IMR-90 (cell line): ENCODE measurements at regions of chr11 and their contacts with region 1.

Region 1: GRCh38 chr11:17504330-17505107 is 27.9 kb upstream of the ABCC8 start:
- DNase-seq: peak; percentile 57
- ATAC-seq: peak; percentile 95
- H3K4me3 ChIP-seq: no peak overlapping the region
- H3K27ac ChIP-seq: no peak overlapping the region
- H3K4me1 ChIP-seq: no peaks in the 10 kb centered on the region
- H3K27me3 ChIP-seq: peaks cover 8% of the 10 kb centered on the region; the same call in 1 of the 2 replicates
- CTCF ChIP-seq: peak; percentile 96
- POLR2A ChIP-seq: no peak
- RAD21 ChIP-seq: peak; percentile 91

Region 2: GRCh38 chr11:16685914-16686313 is 818.6 kb before region 1 on chr11:
- CTCF ChIA-PET with region 1: no interaction called
- POLR2A ChIA-PET with region 1: no interaction called
- dilution Hi-C with region 1: no loop called
- in situ Hi-C with region 1: no loop called
- intact Hi-C with region 1: no loop called
- DNase-seq: no peak
- ATAC-seq: no peak
- H3K4me3 ChIP-seq: no peak overlapping the region
- H3K27ac ChIP-seq: no peak overlapping the region
- H3K4me1 ChIP-seq: no peaks in the 10 kb centered on the region
- H3K27me3 ChIP-seq: no peaks in the 10 kb centered on the region
- CTCF ChIP-seq: no peak
- POLR2A ChIP-seq: no peak
- RAD21 ChIP-seq: no peak

Region 3: GRCh38 chr11:16785520-16786128 is 718.9 kb before region 1 on chr11:
- CTCF ChIA-PET with region 1: no interaction called
- POLR2A ChIA-PET with region 1: no interaction called
- dilution Hi-C with region 1: no loop called
- in situ Hi-C with region 1: no loop called
- intact Hi-C with region 1: loop called (anchors 10 kb)
- DNase-seq: peak; percentile 75
- ATAC-seq: peak; percentile 95
- H3K4me3 ChIP-seq: no peak overlapping the region
- H3K27ac ChIP-seq: no peak overlapping the region
- H3K4me1 ChIP-seq: no peaks in the 10 kb centered on the region
- H3K27me3 ChIP-seq: no peaks in the 10 kb centered on the region; the same call in 1 of the 2 replicates
- CTCF ChIP-seq: peak; percentile 85
- POLR2A ChIP-seq: no peak
- RAD21 ChIP-seq: peak; percentile 79

Region 4: DNA sequence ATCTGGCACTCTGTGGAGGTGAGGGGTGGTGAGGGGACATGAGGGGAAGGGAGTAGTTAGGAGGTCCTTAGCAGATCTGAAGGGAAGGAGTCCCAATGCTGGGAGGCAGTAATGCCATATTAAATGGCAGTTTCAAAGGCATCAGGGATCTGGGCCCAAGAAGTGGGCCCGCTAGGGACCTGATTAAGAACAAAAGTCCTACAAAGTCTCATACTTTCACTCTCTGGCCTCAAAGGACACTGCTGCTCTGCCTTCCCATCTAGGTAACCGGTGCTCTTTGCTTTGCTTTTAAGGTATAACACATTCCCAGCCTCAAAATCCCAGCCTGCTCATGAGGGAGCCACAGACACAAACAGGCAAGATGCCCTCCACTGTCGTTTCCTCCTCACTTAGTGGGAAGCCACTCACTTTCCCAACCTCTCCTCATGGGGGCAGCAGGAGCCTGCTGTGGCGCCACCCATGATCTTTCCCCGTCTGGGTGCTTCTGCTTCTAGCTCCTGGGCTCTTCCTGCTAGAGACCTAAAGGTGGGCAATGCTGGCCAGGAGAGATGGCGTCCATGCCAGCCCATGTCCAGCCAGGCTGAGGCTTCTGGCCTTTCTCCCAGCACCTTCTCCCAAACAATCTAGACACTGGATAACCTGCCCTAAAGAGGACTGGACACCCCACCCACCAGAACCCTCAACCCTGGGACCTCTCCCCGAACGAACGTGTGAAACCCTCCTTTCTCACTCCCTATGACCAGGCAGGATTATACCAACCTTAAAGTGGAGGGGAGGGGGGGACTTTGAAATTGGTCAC is 558.6 kb before region 1 on chr11:
- CTCF ChIA-PET with region 1: no interaction called
- POLR2A ChIA-PET with region 1: no interaction called
- dilution Hi-C with region 1: no loop called
- in situ Hi-C with region 1: loop called (anchors 25 kb)
- intact Hi-C with region 1: loop called (anchors 1 kb)
- DNase-seq: peak; percentile 34
- ATAC-seq: peak; percentile 93
- H3K4me3 ChIP-seq: no peak overlapping the region
- H3K27ac ChIP-seq: no peak overlapping the region
- H3K4me1 ChIP-seq: no peaks in the 10 kb centered on the region
- H3K27me3 ChIP-seq: peaks cover 6% of the 10 kb centered on the region; the same call in 1 of the 2 replicates
- CTCF ChIP-seq: peak; percentile 57
- POLR2A ChIP-seq: no peak
- RAD21 ChIP-seq: peak; percentile 71

Region 5: GRCh38 chr11:17354601-17354991 is 149.9 kb before region 1 on chr11:
- CTCF ChIA-PET with region 1: interaction called, 5 read pairs
- POLR2A ChIA-PET with region 1: interaction called, 3 read pairs
- dilution Hi-C with region 1: no loop called
- in situ Hi-C with region 1: no loop called
- intact Hi-C with region 1: loop called (anchors 1 kb)
- DNase-seq: peak; percentile 79
- ATAC-seq: no peak; the same call in 1 of the 2 replicates
- H3K4me3 ChIP-seq: no peak overlapping the region
- H3K27ac ChIP-seq: no peak overlapping the region
- H3K4me1 ChIP-seq: peaks cover 2% of the 10 kb centered on the region
- H3K27me3 ChIP-seq: no peaks in the 10 kb centered on the region
- CTCF ChIP-seq: peak; percentile 72
- POLR2A ChIP-seq: no peak
- RAD21 ChIP-seq: peak; percentile 48

Region 6: DNA sequence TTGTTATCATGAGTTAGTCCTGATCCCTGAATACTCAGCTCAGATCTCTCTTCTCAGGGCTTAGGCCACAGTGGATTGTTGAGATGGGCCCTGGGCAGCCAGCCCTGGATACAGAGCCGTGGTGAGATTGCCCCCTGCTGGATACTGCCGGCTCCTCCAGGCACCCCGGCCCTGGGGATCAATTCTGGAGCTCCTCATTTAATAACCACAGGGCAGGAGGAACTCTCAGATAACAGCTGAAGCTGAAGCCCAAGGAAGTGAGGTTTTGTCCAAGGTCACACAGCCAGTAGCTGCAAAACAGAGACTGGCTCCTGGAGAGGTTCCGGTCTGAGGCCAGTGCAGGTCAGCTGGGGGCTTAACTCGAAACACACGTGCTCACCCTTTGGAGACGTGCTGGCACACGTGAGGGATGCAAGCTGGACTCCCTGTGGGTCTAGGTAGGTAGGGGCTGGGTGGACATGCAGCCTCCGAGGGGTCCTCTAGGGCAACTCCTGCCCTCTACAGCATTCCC is 23.7 kb after region 1 on chr11:
- CTCF ChIA-PET with region 1: no interaction called
- POLR2A ChIA-PET with region 1: no interaction called
- dilution Hi-C with region 1: no loop called
- in situ Hi-C with region 1: no loop called
- intact Hi-C with region 1: loop called (anchors 1 kb)
- DNase-seq: peak; percentile 28
- ATAC-seq: peak; percentile 98
- H3K4me3 ChIP-seq: no peak overlapping the region
- H3K27ac ChIP-seq: no peak overlapping the region
- H3K4me1 ChIP-seq: no peaks in the 10 kb centered on the region
- H3K27me3 ChIP-seq: peaks cover 13% of the 10 kb centered on the region; the same call in 1 of the 2 replicates
- CTCF ChIP-seq: peak; percentile 67
- POLR2A ChIP-seq: no peak
- RAD21 ChIP-seq: peak; percentile 69